H1 (cell line): ENCODE measurements at regions of chr16 and their contacts with region 1.

Region 1: GRCh38 chr16:50467943-50468760 is 80.0 kb upstream of the NKD1 start:
- DNase-seq: peak in 1 of 2 experiments; percentile 74
- H3K4me3 ChIP-seq: peak overlapping the region; percentile 27 to 53 (median 36)
- H3K27ac ChIP-seq: no peak overlapping the region
- H3K4me1 ChIP-seq: peaks cover 4 to 25% (median 15%) of the 10 kb centered on the region in 4 experiments
- H3K27me3 ChIP-seq: peaks cover 3 to 29% (median 26%) of the 10 kb centered on the region in 4 experiments
- CTCF ChIP-seq: 0 out of 4 replicates have a peak, but pooled peaks of 1 of the 3 experiments have one; percentile 7
- EP300 ChIP-seq: 0 out of 3 replicates have a peak, but pooled peaks of 1 of the 2 experiments have one; percentile 61
- POLR2A ChIP-seq: no peak
- RAD21 ChIP-seq: peak in 1 of 2 experiments; percentile 6; a peak in 1 of 4 replicates

Region 2: DNA sequence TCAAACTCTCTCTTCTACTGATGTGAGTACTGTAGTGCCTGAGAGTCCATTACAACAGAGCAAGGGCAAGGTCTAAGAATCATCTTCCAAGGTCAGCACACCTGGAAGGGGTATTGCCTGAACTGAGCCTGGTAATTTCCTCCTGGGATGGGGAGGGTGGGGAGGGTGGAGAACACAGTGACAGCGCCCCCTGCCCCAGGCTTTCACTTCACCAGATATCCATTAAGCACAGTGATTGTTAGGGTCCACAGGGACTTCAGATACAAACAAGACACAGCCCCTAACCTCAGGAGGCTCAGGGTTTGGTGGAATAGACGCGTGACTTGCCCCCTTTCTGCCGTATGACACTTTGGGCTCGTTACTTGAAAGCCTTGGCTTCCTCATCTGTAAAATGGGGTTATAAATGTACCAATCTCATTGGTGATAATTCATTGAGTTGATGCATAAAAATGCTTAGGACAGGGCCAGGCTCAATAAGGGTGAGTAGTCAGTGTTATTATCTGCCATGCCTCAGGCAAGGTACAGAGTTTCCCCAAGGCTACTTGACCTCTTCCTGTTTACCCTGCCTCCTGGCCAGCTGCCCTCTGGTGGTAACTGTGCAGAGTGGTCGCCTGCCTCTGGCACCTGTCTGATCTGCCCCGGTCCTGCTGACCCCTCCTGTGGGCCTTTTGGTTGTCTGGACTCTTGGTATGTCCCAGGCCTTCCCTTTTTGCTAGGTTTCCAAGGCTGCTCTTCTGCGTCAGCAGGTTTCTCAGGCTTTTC is 86.3 kb before region 1 on chr16:
- CTCF ChIA-PET with region 1: interaction called, 11 read pairs
- POLR2A ChIA-PET with region 1: no interaction called
- DNase-seq: no peak
- H3K4me3 ChIP-seq: no peak overlapping the region
- H3K27ac ChIP-seq: no peak overlapping the region
- H3K4me1 ChIP-seq: peaks cover 0 to 5% (median 0%) of the 10 kb centered on the region in 4 experiments; a peak in 1 of 7 replicates
- H3K27me3 ChIP-seq: no peaks in the 10 kb centered on the region
- CTCF ChIP-seq: peak; percentile 70 to 83 (median 79)
- EP300 ChIP-seq: no peak
- POLR2A ChIP-seq: no peak
- RAD21 ChIP-seq: peak; percentile 41 to 62

Region 3: DNA sequence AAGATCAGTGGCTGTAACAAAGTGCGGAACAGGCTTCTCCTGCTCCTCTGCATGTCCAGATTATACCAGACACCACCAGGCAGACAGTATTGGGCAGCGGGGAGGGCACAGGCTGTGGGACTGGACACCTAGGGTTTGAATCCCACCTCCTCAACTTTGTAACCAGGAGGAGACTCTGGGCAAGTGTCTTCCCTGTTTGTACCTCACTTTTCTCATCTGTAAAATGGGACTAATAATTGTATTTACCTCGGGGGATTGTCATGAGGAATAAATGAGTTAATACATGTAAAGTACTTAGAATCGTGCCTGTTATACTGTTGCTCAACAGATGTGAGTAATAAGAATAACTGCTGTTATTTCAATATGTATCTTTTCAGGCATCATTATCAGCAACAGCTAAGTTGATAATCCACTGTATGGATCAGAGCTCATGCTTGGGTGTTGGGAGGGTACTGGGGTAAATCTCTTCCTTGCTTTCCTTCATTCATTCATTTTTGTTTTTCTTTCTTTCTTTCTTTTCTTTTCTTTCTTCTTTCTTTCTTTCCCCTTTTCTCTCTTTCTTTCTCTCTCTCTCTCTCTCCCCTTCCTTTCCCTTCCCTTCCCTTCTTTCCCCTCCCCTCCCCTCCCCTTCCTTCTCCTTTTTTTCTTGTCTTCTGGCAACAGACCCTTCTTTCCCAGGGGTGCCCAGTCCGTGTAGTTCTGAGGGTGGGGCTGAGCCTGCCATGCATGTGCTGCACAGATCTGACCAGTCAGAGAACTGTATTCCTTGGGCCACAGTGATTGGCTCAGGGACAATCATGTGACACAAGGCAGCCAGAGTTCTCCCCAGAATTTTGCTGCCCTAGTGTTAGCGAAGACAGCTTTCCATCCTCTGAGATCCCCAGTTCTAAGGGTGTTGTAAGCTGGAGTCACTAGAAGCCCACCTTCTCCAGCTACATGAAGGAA is 74.0 kb before region 1 on chr16:
- CTCF ChIA-PET with region 1: no interaction called
- POLR2A ChIA-PET with region 1: no interaction called
- DNase-seq: peak in 1 of 2 experiments; percentile 38
- H3K4me3 ChIP-seq: no peak overlapping the region
- H3K27ac ChIP-seq: no peak overlapping the region
- H3K4me1 ChIP-seq: no peaks in the 10 kb centered on the region; a peak in 2 of 7 replicates
- H3K27me3 ChIP-seq: no peaks in the 10 kb centered on the region
- CTCF ChIP-seq: no peak
- EP300 ChIP-seq: no peak
- POLR2A ChIP-seq: no peak
- RAD21 ChIP-seq: no peak

Region 4: GRCh38 chr16:50437769-50438437 is 30.2 kb before region 1 on chr16:
- CTCF ChIA-PET with region 1: interaction called, 10 read pairs
- POLR2A ChIA-PET with region 1: no interaction called
- DNase-seq: no peak
- H3K4me3 ChIP-seq: no peak overlapping the region
- H3K27ac ChIP-seq: no peak overlapping the region
- H3K4me1 ChIP-seq: peaks cover 0 to 3% (median 0%) of the 10 kb centered on the region in 4 experiments; a peak in 1 of 7 replicates
- H3K27me3 ChIP-seq: peaks cover 0 to 3% (median under 1%) of the 10 kb centered on the region in 4 experiments; a peak in 1 of 7 replicates
- CTCF ChIP-seq: no peak
- EP300 ChIP-seq: no peak
- POLR2A ChIP-seq: no peak
- RAD21 ChIP-seq: no peak

Region 5: GRCh38 chr16:50448501-50448900 is 19.7 kb before region 1 on chr16:
- CTCF ChIA-PET with region 1: interaction called, 55 read pairs
- POLR2A ChIA-PET with region 1: interaction called, 3 read pairs
- DNase-seq: peak in 1 of 2 experiments; percentile 63
- H3K4me3 ChIP-seq: no peak overlapping the region; a peak in 1 of 8 replicates
- H3K27ac ChIP-seq: no peak overlapping the region
- H3K4me1 ChIP-seq: peaks cover 9 to 30% (median 17%) of the 10 kb centered on the region in 4 experiments; a peak in 6 of 7 replicates
- H3K27me3 ChIP-seq: no peaks in the 10 kb centered on the region; a peak in 1 of 7 replicates
- CTCF ChIP-seq: peak; percentile 62 to 76 (median 67)
- EP300 ChIP-seq: no peak
- POLR2A ChIP-seq: no peak
- RAD21 ChIP-seq: peak; percentile 65 to 75

Region 6: GRCh38 chr16:50478761-50479125 is 10.6 kb after region 1 on chr16:
- CTCF ChIA-PET with region 1: interaction called, 11 read pairs
- POLR2A ChIA-PET with region 1: interaction called, 4 read pairs
- DNase-seq: no peak
- H3K4me3 ChIP-seq: no peak overlapping the region
- H3K27ac ChIP-seq: no peak overlapping the region
- H3K4me1 ChIP-seq: peaks cover 0 to 6% (median 0%) of the 10 kb centered on the region in 4 experiments; a peak in 3 of 7 replicates
- H3K27me3 ChIP-seq: no peaks in the 10 kb centered on the region
- CTCF ChIP-seq: no peak
- EP300 ChIP-seq: no peak
- POLR2A ChIP-seq: no peak
- RAD21 ChIP-seq: no peak

Region 7: GRCh38 chr16:50523710-50524109 is 55.6 kb after region 1 on chr16:
- CTCF ChIA-PET with region 1: no interaction called
- POLR2A ChIA-PET with region 1: no interaction called
- DNase-seq: no peak
- H3K4me3 ChIP-seq: no peak overlapping the region
- H3K27ac ChIP-seq: no peak overlapping the region
- H3K4me1 ChIP-seq: peaks cover 0 to 2% (median 0%) of the 10 kb centered on the region in 4 experiments; a peak in 1 of 7 replicates
- H3K27me3 ChIP-seq: no peaks in the 10 kb centered on the region
- CTCF ChIP-seq: no peak
- EP300 ChIP-seq: no peak
- POLR2A ChIP-seq: no peak
- RAD21 ChIP-seq: no peak